Left cardiac atrium (tissue), 4 donors: ENCODE measurements at regions of chr14 and their contacts with region 1.

Region 1: GRCh38 chr14:80996049-80996901 is 40.9 kb downstream of the TSHR start:
- DNase-seq: no peak
- ATAC-seq: peak; percentile 95 to 98

Region 2: DNA sequence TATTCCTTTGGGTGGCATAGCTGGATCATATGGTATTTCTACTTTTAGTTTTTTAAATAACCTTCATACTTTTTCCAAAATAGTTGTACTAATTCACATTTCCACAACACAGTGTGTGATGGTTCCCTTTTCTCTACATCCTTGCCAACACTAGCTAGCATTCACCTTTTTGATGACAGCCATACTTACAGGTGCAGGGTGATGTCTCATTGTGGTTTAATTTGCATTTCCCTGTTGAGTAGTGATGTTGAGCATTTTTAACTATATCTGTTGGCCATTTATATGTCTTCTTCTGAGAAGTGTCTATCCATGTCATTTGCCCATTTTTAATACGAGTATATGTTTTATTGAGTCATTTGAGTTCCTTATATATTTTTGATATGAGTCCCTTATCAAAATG is 55.3 kb after region 1 on chr14:
- intact Hi-C with region 1: no loop called
- DNase-seq: no peak
- ATAC-seq: no peak

Region 3: DNA sequence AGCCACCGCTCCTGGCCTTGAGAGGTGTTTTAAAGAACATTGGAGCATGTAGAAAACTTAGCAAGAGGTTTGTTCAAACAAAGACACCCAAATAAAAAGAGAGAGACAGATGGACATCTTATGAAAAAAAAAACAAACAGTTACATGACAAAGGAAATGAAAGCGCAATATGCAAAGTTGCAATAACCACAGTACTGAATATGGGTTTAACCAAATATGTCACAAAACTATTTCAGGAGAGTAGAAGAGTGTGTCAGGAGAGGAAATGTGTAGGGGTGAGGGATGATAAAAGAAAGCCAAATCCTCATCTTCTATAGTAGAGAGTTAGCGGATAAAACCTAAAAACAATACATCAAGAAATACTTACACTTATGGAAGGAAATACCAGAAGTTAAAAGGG is 126.1 kb after region 1 on chr14:
- intact Hi-C with region 1: no loop called
- DNase-seq: no peak
- ATAC-seq: no peak

Region 4: DNA sequence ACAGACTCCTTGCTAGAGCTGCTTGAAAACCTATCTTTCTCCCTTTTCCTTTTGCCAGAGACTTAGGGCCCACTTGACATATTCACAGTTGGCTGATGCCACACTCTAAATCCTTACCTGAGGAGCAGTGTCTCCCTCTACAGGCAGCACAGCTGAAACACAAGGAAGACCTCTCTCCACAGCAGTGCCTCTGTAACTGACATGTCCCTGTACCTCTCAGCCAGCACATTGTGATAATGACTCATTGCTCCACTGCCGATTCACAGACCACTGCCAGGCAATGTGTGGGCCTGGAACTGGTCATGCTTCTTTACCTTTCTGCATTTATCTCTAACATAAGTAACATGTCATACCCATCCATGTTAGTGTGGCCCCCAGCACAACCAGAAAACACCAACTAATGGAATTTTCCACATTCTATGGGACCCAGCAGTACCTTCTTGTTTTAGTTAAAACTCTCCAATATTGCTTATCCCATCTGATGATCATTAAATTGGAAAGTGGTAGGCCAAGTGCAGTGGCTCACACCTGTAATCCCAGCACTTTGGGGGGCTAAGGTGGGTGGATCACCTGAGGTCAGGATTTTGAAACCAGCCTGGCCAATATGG is 168.0 kb after region 1 on chr14:
- intact Hi-C with region 1: loop called in 1 of 2 experiments (anchors 5 kb)
- DNase-seq: peak; percentile 34
- ATAC-seq: peak; percentile 74 to 92

Region 5: DNA sequence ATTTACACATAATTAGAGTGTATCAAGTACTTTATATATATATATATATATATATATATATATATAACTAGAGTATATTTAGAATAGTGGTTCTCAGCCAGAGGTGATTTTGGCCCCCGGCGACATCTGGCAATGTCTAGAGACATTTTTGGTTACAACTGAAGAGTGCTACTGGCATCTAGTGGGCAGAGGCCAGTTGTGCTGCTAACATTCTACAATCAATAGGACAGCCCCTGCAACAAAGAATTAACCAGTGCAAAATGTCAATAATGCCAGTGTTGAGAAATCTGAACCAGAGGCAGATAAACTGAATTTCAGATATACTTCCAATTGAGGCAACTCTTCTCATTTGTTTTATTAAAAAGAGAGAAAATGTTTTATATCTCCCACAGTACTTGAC is 215.6 kb after region 1 on chr14:
- intact Hi-C with region 1: loop called in 1 of 2 experiments (anchors 5 kb)
- DNase-seq: peak; percentile 43
- ATAC-seq: peak; percentile 48 to 74